Dendritic cell treated with granulocyte-macrophage colony-stimulating factor and Interleukin-4, amounts not matched to agents 40 ng/mL and 50 ng/mL, for 4 days (primary cell): ENCODE measurements at regions of chr3 and their contacts with region 1.

Region 1: GRCh38 chr3:184417619-184418327 is 37.9 kb downstream of the CHRD start:
- H3K4me3 Mint-ChIP-seq: no peak overlapping the region
- H3K27ac Mint-ChIP-seq: no peak overlapping the region
- H3K4me1 Mint-ChIP-seq: no peaks in the 10 kb centered on the region
- H3K27me3 Mint-ChIP-seq: peaks cover 1% of the 10 kb centered on the region

Region 2: DNA sequence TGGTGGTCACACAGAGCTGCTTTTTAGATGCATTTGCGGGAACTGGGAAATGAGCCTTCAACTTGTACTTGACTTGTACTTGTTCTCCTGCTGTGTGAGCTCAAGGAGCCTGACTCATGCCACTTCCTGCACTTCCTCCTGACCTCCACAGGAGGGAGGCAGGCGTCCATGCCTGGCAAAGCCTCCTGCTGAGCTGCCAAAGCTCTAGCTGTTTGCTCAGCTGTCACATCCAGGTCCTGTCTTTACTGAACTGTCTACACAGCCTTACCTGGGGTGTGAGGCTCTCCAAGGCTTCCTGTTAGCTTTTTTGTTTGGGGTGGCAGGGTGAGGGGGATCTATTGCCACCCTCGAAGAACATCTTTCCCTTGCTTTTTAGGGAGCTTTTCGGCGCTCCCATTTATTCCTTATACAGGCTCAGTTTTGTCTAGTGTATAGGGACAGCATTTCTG is 46.2 kb before region 1 on chr3:
- intact Hi-C with region 1: loop called (anchors 5 kb)
- H3K4me3 Mint-ChIP-seq: no peak overlapping the region
- H3K27ac Mint-ChIP-seq: no peak overlapping the region
- H3K4me1 Mint-ChIP-seq: peaks cover 13% of the 10 kb centered on the region
- H3K27me3 Mint-ChIP-seq: peaks cover 38% of the 10 kb centered on the region

Region 3: GRCh38 chr3:184513276-184514170 is 95.8 kb after region 1 on chr3:
- intact Hi-C with region 1: loop called (anchors 1 kb)
- H3K4me3 Mint-ChIP-seq: peak overlapping the region; percentile 76
- H3K27ac Mint-ChIP-seq: peak overlapping the region; percentile 84
- H3K4me1 Mint-ChIP-seq: peaks cover 39% of the 10 kb centered on the region
- H3K27me3 Mint-ChIP-seq: peaks cover 21% of the 10 kb centered on the region